ENCODE measurements at regions of chr7 and their contacts with region 1.

Region 1: DNA sequence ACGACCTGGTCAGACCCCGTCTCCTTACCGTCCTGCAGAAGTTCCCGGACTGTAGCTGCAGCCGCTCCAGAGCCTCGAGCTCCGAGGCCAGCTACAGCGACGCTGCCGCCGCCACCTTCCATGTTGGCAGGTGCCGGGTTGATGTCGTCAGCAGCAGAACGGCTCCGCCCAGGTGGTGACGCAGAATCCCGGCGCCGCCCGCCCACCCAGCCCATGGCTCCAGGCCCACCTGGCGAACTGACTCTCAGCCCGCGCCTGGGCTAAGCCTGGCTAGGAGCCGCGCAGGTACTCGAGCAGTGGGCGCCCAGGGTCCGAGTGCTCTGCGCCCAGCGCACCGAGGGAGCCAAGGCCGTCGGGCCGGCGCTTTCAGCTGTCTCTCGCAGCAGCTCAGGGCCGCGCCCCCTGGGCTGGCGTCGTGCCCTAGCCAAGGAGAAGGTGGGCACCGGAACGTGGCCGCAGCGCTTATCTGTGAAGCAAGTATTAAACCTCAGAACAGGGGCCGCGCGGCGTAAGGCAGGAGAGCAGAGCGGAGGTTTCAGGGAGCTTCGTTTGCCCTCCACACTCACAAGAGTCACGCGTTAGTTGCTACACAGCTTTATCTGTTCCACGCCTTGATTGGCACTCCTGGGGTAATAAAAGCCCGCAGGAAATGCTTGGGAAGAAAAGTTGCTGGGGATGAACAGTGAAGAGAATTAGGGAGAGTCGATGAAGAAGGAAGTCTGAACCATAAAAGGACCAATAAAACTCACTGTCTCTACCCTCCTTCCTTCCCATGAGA is at the starts of genes COG5 and DUS4L:
- DNase-seq: peak; percentile 73 to 79 (median 78)
- H3K4me3 ChIP-seq: peak within 1 kb of the TSS; percentile 88 to 99 (median 93)
- H3K4me3 Mint-ChIP-seq: peak within 1 kb of the TSS; percentile 89 to 91
- H3K27ac ChIP-seq: peak within 1 kb of the TSS; percentile 84 to 98
- H3K27ac Mint-ChIP-seq: peak within 1 kb of the TSS; percentile 91 to 98 (median 95)
- H3K4me1 ChIP-seq: peaks cover 25 to 38% of the 10 kb centered on the region in 2 donors
- H3K4me1 Mint-ChIP-seq: peaks cover 41% of the 10 kb centered on the region
- H3K27me3 ChIP-seq: no peaks in the 10 kb centered on the region
- H3K27me3 Mint-ChIP-seq: no peaks in the 10 kb centered on the region
- CTCF ChIP-seq: no peak
- polyA plus RNA-seq, gene COG5: 12.7 to 29.0 (median 28.1) TPM
- polyA plus RNA-seq, gene DUS4L: 1.6 to 2.3 (median 1.7) TPM

Region 2: DNA sequence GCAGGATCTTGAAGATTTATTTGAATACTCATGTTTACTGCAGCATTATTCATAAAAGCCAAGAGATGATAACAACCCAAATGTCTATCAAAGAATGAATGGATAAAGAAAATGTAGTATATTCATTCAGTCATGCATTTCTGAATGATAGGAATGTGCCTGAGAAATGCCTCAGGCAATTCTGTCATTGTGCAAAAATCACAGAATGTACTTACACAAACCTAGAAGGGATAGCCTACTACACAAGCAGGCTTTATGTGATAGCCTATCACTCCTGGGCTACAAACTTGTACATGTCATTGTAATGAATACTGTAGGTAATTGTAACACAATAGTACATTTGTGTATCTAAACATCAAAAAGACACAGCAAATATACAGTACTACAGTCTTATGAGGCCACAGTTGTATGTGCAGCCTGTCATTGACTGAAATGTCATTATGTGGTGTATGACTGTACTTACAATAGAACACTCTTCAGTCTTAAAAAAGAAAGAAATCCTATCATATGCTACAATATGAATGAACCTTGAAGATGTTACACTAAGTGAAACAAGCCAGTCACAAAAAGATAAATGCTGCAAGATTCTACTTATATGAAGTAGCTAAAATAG is 235.9 kb before region 1 on chr7:
- intact Hi-C with region 1: no loop called
- DNase-seq: no peak
- H3K4me3 ChIP-seq: no peak overlapping the region
- H3K4me3 Mint-ChIP-seq: no peak overlapping the region
- H3K27ac ChIP-seq: no peak overlapping the region
- H3K27ac Mint-ChIP-seq: no peak overlapping the region
- H3K4me1 ChIP-seq: peaks cover 7 to 8% of the 10 kb centered on the region in 2 donors
- H3K4me1 Mint-ChIP-seq: peaks cover 7% of the 10 kb centered on the region
- H3K27me3 ChIP-seq: no peaks in the 10 kb centered on the region
- H3K27me3 Mint-ChIP-seq: no peaks in the 10 kb centered on the region
- CTCF ChIP-seq: no peak

Region 3: GRCh38 chr7:107890962-107891635 is 327.1 kb after region 1 on chr7 and contains the start of gene DLD:
- intact Hi-C with region 1: loop called in 1 of 2 experiments (anchors 10 kb)
- DNase-seq: peak; percentile 87 to 91 (median 91)
- H3K4me3 ChIP-seq: peak within 1 kb of the TSS; percentile 43 to 80 (median 54)
- H3K4me3 Mint-ChIP-seq: peak within 1 kb of the TSS; percentile 94 to 97
- H3K27ac ChIP-seq: peak within 1 kb of the TSS; percentile 86 to 95
- H3K27ac Mint-ChIP-seq: peak within 1 kb of the TSS; percentile 99 to 100 (median 100)
- H3K4me1 ChIP-seq: peaks cover 27 to 34% of the 10 kb centered on the region in 2 donors
- H3K4me1 Mint-ChIP-seq: peaks cover 33% of the 10 kb centered on the region
- H3K27me3 ChIP-seq: no peaks in the 10 kb centered on the region
- H3K27me3 Mint-ChIP-seq: peaks cover 0 to 3% (median 0%) of the 10 kb centered on the region in 3 donors
- CTCF ChIP-seq: no peak
- polyA plus RNA-seq, gene DLD: 54.5 to 73.6 (median 70.1) TPM